ENCODE measurements at regions of chr12 and their contacts with region 1.

Region 1: DNA sequence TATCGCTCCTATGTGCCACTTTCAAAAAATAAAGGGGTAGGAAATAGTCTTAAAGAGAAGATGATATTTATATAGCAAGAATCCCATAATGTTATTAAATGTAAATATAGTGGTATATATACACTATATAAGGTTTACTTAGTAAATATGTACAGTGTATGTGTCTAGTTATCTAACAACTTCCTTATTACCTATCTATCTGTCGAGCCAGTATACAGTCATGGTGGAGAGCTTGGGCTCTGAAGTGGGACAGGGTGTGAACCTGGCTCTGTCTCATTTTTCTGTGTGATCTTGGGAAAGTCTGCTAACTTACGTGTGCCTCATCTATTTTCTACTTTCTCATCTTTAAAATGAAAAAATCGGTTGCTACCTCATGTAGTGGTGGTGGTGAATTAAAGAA is 62.8 kb upstream of the SINHCAF start:
- DNase-seq: no peak
- H3K4me3 ChIP-seq: no peak overlapping the region
- H3K27ac ChIP-seq: no peak overlapping the region
- H3K4me1 ChIP-seq: no peaks in the 10 kb centered on the region
- H3K27me3 ChIP-seq: no peaks in the 10 kb centered on the region
- CTCF ChIP-seq: no peak

Region 2: DNA sequence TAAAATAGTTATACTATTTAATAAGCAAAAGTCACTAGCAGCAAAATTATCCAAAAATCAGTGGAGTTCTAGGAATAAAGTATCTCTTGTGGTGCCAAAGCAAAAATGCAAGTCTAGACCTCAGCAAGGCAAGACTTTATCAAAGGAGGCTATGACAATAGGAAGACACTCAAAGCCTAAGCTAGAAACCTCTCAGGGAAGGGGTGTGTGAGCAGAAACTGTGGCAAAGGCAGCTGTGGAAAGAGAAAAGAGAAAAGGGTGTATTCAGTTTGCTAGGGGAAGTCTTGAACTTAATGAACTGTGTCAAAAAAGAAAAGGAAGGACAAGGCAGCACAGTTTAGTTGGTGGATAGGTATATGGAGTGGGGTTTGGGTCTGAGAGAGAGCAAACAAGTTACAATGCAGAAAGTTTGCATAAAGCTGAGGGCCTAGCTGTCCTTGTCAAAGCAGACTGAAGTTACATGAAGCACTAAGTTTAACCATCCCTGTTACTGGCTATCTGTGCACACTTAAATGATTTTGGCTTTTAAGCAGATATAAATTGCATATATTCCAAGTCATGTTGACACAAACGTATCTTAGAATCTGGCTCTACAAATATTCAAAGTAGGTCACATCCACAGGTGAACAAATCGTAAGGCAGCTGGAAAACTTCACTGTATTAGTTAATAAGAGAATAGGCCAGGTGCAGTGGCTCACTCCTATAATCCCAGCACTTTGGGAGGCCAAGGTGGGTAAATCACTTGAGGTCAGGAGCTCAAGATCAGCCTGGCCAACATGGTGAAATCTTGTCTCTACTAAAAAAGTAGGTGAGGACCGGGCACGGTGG is 371.1 kb after region 1 on chr12:
- CTCF ChIA-PET with region 1: no interaction called
- POLR2A ChIA-PET with region 1: interaction called, 25 read pairs
- intact Hi-C with region 1: no loop called
- DNase-seq: peak; percentile 55
- H3K4me3 ChIP-seq: no peak overlapping the region
- H3K27ac ChIP-seq: peak overlapping the region; percentile 96
- H3K4me1 ChIP-seq: peaks cover 31% of the 10 kb centered on the region
- H3K27me3 ChIP-seq: no peaks in the 10 kb centered on the region
- CTCF ChIP-seq: no peak

Measured in A673 (cell line).